Activated B cell treated with CpG ODN at 0.5 μM for 24 hours (primary cell): ENCODE measurements at regions of chr11 and their contacts with region 1.

Region 1: DNA sequence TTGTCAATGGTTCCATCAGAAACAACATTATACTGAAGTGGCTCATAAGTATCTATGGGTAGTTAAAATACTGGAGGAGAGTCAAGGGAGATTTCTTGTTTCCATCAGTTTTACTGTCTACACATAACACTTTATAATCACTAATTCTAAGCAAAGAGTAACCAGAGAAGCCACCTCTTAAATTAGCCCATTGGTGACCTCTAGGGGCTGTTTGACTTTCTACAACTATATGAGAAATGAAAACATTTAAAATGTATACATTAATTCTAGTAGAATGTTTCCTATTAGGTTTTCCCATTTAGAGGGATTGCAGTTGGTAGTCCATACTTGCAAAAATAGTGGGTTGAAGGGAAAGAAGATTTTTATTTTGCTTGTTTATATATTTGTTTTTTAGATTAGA is 504.3 kb downstream of the FAM181B start:
- DNase-seq: no peak
- ATAC-seq: no peak
- H3K4me3 Mint-ChIP-seq: no peak overlapping the region
- H3K27ac Mint-ChIP-seq: no peak overlapping the region
- H3K4me1 Mint-ChIP-seq: no peaks in the 10 kb centered on the region
- H3K27me3 Mint-ChIP-seq: no peaks in the 10 kb centered on the region
- CTCF ChIP-seq: no peak

Region 2: DNA sequence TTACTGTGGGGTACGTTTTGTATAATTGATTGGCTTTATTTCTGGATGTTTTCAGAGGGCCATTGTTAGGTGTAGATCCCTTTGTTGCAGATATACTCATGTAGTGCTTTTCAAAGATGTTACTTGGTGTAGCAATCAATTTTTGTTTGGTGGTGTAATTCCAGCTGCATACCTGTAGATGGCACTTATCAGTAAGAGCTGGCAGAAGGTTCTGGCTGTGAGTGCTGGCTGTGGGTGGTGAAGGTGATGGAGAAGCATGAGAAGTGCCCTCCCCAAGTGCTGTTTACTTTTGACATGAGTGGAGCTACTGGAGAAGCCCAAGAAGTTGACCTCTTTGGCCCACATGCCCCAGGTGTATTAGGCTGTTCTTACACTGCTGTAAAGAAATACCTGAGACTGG is 570.6 kb before region 1 on chr11:
- CTCF ChIA-PET with region 1: interaction called, 3 read pairs
- POLR2A ChIA-PET with region 1: no interaction called
- intact Hi-C with region 1: loop called (anchors 1 kb)
- DNase-seq: no peak
- ATAC-seq: no peak
- H3K4me3 Mint-ChIP-seq: no peak overlapping the region
- H3K27ac Mint-ChIP-seq: no peak overlapping the region
- H3K4me1 Mint-ChIP-seq: no peaks in the 10 kb centered on the region
- H3K27me3 Mint-ChIP-seq: no peaks in the 10 kb centered on the region
- CTCF ChIP-seq: no peak